Dendritic cell treated with granulocyte-macrophage colony-stimulating factor and Interleukin-4, amounts not matched to agents 40 ng/mL and 50 ng/mL, for 4 days (primary cell): ENCODE measurements at regions of chr2 and their contacts with region 1.

Region 1: DNA sequence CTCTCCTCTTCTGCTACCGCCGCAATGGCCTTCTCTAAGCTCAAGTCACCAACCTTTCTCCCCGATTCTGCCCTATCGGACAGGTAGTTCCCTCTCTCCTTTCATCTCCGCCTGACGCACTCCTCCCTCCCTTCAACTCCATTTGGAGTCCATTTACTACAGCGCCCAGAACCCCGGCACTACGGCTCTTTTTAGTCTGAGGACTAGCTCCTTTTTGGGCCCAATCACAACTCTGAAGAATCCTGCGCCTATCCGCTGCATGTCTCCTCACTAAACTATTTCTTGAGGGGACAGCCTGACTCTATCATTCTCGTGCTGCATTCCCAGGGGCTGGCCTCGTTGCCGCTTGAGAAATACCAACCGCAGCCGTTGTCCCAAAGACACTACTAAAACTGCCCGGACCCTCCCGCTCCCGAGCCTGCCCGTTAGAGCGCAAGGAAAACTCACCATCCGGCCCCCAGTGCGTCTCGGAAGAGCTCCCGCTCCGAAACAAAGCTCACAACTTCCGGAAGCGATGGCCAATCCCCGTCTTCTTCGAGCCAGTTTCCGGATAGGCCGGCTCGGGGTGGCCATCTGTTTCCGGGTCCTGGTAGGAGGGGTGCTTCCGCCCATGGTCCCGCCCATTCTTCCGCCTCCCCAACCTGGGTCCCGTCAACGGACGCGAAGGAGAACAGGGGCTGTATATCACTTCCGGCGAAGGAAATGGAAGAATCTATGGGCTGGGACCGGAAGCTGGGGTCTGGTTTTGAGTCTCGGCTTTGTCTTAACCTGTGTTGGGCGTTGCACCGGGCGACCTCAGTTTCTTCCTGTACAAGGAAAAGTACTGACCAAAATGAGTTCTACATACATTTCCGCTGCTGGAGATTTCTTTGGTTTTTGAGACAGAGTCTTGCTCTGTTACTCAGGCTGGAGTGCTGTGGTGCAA is at the start of gene TPRKB:
- H3K4me3 Mint-ChIP-seq: peak within 1 kb of the TSS; percentile 86
- H3K27ac Mint-ChIP-seq: peak within 1 kb of the TSS; percentile 83
- H3K4me1 Mint-ChIP-seq: peaks cover 14% of the 10 kb centered on the region
- H3K27me3 Mint-ChIP-seq: peaks cover 2% of the 10 kb centered on the region

Region 2: GRCh38 chr2:72081451-72081850 is 1655.7 kb before region 1 on chr2:
- intact Hi-C with region 1: no loop called
- H3K4me3 Mint-ChIP-seq: no peak overlapping the region
- H3K27ac Mint-ChIP-seq: no peak overlapping the region
- H3K4me1 Mint-ChIP-seq: no peaks in the 10 kb centered on the region
- H3K27me3 Mint-ChIP-seq: no peaks in the 10 kb centered on the region

Region 3: DNA sequence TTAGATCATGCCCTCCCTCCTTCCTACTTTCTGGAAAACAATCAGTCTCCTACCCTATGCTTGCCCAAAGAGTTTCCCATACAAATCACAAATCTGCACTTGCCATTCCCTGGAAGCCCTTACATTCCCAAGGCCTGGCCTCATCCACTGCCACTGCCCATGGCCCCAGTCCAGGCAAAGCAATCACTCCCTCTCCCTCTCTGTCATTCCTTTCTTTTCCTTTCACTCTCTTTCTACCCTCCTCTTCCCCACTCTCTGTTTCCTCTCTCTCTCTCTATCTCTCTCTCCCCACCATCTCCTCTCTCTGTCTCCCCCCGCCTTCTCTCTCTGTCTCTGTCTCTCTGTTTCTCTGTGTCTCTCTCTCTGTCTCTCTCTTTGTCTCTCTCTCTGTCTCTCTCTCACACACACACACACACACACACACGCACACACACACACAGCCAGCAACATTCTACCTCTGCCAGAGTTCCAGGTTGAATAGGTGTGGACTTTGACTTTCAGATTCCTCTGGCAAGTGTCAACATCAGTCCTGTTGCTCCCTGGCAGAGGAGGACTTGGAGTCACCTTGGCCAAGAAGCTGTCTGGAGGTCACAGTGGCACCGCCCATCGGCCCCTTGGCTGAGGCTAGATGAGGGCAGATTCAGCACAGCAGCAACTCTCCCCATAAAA is 51.2 kb before region 1 on chr2:
- intact Hi-C with region 1: loop called (anchors 10 kb)
- H3K4me3 Mint-ChIP-seq: no peak overlapping the region
- H3K27ac Mint-ChIP-seq: peak overlapping the region; percentile 9
- H3K4me1 Mint-ChIP-seq: peaks cover 12% of the 10 kb centered on the region
- H3K27me3 Mint-ChIP-seq: peaks cover 3% of the 10 kb centered on the region

Region 4: DNA sequence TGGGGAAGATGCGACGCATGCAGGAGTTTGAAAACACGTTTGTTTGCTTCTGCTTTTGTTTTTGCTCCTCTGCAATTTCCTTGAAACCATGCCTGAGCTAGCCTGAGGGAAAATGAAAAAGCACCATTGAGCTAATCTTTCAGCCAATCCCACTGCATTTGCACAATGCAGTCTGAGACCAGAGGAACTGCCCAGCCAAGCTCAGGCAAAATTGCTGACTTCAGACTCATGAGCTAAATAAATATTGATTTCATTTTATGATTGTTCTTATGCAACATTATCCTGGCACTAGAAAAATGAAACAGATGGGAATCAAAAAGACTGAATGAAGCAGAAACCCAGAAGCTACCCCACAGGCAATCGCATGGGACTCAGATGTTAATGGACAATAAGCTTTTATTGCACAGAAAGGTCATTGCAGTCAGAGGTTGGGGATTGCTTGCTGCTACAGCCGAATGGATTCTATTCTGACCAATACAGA is 36.9 kb before region 1 on chr2:
- intact Hi-C with region 1: loop called (anchors 5 kb)
- H3K4me3 Mint-ChIP-seq: peak overlapping the region; percentile 51
- H3K27ac Mint-ChIP-seq: peak overlapping the region; percentile 86
- H3K4me1 Mint-ChIP-seq: peaks cover 65% of the 10 kb centered on the region
- H3K27me3 Mint-ChIP-seq: peaks cover 3% of the 10 kb centered on the region

Region 5: GRCh38 chr2:73716543-73717250 is 20.4 kb before region 1 on chr2:
- intact Hi-C with region 1: loop called (anchors 1 kb)
- H3K4me3 Mint-ChIP-seq: peak overlapping the region; percentile 80
- H3K27ac Mint-ChIP-seq: peak overlapping the region; percentile 92
- H3K4me1 Mint-ChIP-seq: peaks cover 37% of the 10 kb centered on the region
- H3K27me3 Mint-ChIP-seq: no peaks in the 10 kb centered on the region

Region 6: DNA sequence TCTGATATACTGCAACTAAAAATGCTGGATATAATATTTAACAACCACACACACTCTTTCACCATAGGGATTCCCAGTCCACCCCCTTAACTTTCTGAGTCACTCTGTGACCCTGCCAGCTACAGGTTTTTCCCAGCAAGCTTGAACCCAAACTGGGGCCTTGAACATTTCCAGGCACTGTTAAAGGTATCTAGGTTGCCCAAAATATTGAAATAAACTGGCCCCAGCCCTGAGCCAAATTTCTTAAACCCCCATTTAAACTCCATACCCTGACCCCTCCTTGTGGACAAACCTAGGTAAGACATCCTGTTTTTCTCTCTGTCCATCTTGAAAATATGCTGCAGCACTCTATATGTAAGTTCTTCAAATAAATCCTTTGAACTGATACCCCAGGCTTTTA is 662.7 kb after region 1 on chr2:
- intact Hi-C with region 1: no loop called
- H3K4me3 Mint-ChIP-seq: no peak overlapping the region
- H3K27ac Mint-ChIP-seq: no peak overlapping the region
- H3K4me1 Mint-ChIP-seq: no peaks in the 10 kb centered on the region
- H3K27me3 Mint-ChIP-seq: no peaks in the 10 kb centered on the region